OCI-LY7 (cell line): ENCODE measurements at regions of chr2 and their contacts with region 1.

Region 1: DNA sequence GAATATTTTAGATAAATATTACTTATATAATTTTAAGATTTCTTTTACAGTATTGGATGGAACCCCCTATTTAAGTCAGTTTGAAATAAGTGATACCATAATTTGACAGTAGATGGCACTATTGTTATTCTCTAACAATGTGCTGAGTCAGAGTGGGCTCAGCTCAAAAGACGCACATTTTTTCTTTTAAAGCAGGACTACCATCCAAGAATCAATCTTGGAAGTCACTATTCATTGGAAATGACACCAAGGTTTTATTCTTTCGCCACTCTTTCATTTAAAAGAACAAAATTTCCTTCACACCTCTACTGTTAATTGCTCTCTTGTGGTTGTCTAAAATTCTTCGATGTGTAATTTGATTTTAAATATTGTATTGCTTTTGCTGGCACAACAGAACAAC is 32.6 kb upstream of the SPAG16 start:
- DNase-seq: peak; percentile 83
- H3K4me3 ChIP-seq: no peak overlapping the region
- H3K27ac ChIP-seq: no peak overlapping the region
- H3K4me1 ChIP-seq: peaks cover 10% of the 10 kb centered on the region
- CTCF ChIP-seq: peak; percentile 85

Region 2: DNA sequence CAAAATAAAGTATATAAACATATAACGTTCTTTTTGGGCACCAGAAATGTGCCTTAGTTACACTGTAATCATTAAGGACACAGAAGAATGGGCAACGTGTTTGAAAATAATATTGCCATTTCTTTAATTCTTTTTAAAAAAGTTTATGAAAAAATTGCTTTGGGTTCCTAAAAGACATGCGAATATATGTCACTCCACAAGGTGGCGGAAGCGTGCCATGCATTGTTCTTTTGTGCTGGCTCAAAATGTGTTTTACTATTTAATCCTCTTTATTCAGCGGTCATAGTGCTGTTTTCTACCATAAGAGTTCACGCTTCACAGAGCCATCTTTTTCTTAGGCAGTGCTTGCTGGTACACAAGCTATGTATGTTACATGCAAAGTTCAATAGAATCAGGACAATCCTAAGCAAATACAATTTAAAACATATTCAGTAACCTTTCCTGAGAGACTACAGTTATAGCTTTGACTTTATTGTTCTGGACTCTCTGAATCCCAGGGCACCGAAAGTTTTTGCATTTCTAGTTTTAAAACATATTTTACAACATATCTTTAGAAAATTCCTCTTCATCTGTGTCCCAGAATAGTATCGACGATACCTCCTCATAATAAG is 565.2 kb before region 1 on chr2:
- CTCF ChIA-PET with region 1: no interaction called
- POLR2A ChIA-PET with region 1: no interaction called
- intact Hi-C with region 1: loop called (anchors 2 kb)
- DNase-seq: peak; percentile 73
- H3K4me3 ChIP-seq: no peak overlapping the region
- H3K27ac ChIP-seq: no peak overlapping the region
- H3K4me1 ChIP-seq: peaks cover 5% of the 10 kb centered on the region
- CTCF ChIP-seq: peak; percentile 98

Region 3: GRCh38 chr2:212863185-212863588 is 388.4 kb before region 1 on chr2:
- CTCF ChIA-PET with region 1: no interaction called
- POLR2A ChIA-PET with region 1: no interaction called
- intact Hi-C with region 1: loop called (anchors 2 kb)
- DNase-seq: peak; percentile 84
- H3K4me3 ChIP-seq: no peak overlapping the region
- H3K27ac ChIP-seq: no peak overlapping the region
- H3K4me1 ChIP-seq: no peaks in the 10 kb centered on the region
- CTCF ChIP-seq: peak; percentile 98

Region 4: GRCh38 chr2:213086571-213086970 is 165.0 kb before region 1 on chr2:
- CTCF ChIA-PET with region 1: no interaction called
- POLR2A ChIA-PET with region 1: no interaction called
- intact Hi-C with region 1: no loop called
- DNase-seq: no peak
- H3K4me3 ChIP-seq: no peak overlapping the region
- H3K27ac ChIP-seq: no peak overlapping the region
- H3K4me1 ChIP-seq: no peaks in the 10 kb centered on the region
- CTCF ChIP-seq: no peak

Region 5: DNA sequence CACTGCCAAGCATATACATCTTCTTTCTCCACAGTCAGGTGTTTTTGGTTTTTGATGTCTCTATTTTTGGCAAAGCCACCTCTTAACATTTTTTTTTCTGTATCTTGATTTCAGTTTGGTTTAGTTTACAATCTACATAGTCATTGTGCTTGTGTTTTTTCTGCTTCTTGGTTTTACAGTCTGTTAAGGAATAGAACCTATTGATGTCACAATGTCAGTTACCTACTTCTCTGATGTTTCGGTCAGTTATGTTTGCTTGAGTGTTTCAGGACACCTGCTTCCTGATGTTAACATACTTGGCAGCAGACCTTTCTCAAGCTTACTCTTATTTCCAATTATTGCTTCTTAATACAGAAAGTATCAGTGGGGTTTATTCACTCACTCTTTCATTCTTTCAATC is 286.0 kb after region 1 on chr2:
- CTCF ChIA-PET with region 1: no interaction called
- POLR2A ChIA-PET with region 1: no interaction called
- intact Hi-C with region 1: no loop called
- DNase-seq: peak; percentile 68
- H3K4me3 ChIP-seq: no peak overlapping the region
- H3K27ac ChIP-seq: peak overlapping the region; percentile 69
- H3K4me1 ChIP-seq: peaks cover 17% of the 10 kb centered on the region
- CTCF ChIP-seq: no peak

Region 6: DNA sequence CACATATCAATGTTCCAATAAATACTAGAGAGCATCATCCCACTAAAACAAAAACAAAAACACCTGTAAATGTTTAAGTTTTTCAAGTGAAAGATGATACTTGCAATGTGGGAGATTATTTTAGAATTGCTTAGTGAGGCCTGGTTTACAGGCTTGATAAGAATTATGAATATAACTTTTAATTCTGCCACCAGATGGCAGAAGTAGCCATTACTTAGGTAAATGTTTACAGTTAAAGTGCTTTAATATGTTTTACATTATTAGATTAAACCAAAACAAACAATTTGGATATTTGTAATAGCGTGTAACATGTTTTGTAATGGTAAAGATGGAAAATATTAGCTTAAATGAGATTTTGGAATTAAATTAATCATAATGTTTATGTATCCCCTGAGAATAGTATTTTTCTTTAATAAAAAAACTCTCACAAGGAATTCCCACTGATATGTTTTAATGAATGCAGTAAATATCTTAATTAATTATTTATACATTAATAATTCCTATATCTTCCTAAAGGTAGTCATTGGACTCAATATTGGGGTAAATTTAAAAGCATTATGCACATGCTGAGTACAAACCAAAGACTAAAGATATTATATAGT is 554.6 kb after region 1 on chr2:
- CTCF ChIA-PET with region 1: no interaction called
- POLR2A ChIA-PET with region 1: no interaction called
- intact Hi-C with region 1: loop called (anchors 10 kb)
- DNase-seq: peak; percentile 31
- H3K4me3 ChIP-seq: no peak overlapping the region
- H3K27ac ChIP-seq: no peak overlapping the region
- H3K4me1 ChIP-seq: no peaks in the 10 kb centered on the region
- CTCF ChIP-seq: peak; percentile 79

Region 7: GRCh38 chr2:215002500-215002899 is 1750.9 kb after region 1 on chr2:
- CTCF ChIA-PET with region 1: no interaction called
- POLR2A ChIA-PET with region 1: no interaction called
- intact Hi-C with region 1: loop called (anchors 10 kb)
- DNase-seq: peak; percentile 74
- H3K4me3 ChIP-seq: no peak overlapping the region
- H3K27ac ChIP-seq: no peak overlapping the region
- H3K4me1 ChIP-seq: peaks cover 14% of the 10 kb centered on the region
- CTCF ChIP-seq: peak; percentile 91